ENCODE measurements at regions of chr11 and their contacts with region 1.

Region 1: DNA sequence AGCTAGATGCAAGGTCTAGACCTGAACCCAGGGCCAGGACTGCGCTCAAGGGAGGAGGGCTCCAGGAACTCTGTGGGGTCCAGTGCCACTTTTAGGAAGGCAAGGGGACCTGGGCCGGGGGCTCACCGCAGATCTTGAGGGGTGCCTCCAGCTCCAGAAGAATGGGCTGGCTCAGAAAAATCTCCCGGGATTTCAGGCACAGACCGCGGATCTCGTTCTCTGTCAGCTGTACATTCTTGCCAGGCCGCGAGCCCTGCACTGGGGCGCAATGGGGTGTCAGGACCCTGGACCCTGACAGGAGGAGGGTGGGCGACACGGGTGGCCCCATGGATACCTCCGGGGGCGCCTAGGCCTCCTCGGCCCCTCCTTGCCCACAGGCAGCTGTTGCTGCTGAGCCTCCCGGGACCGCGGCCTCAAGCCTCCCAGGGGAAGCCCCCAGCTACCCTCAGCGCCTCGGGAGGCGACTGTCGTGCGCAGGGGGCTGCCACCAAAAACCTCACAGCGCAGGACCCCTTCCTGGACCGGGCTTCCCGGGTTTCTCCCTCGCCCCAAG is 640 bp downstream of the PPP1CA start:
- DNase-seq: no peak
- ATAC-seq: peak; percentile 7

Region 2: DNA sequence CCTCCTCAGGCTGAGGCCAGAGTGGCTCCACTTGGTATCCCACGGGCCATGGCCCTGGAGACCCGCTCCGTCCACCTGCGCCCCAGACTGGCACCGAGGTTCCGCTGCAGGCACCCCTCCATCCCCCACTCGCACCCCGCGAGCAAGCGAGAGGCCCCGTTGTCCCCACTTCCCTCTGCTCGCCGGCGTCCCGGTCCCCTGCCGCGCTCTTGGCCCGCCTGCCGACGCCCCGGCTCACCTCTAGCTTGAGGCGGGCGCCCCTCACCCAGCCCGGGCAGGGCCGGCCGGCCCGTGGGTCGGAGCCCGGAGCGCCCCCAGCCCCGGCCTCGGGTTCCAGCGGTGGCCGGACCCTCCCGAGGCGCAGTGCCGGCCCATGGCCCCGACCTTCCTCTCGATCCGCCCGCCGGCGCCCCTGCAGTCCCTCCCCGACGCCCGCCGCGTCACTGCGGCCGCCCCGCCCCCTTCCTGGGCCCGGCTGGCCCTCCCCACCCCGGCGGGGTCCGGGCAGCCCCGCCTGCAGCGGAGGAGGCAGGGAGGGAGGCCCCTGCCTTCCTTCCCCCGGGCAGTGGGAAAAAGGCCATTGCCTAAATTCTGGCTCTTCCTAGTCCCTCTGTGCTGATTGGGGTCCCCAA is 104.0 kb after region 1 on chr11 and contains the start of gene PITPNM1:
- intact Hi-C with region 1: loop called (anchors 5 kb)
- DNase-seq: peak; percentile 89
- ATAC-seq: peak; percentile 47
- total RNA-seq, gene PITPNM1: 80.0 TPM

Region 3: DNA sequence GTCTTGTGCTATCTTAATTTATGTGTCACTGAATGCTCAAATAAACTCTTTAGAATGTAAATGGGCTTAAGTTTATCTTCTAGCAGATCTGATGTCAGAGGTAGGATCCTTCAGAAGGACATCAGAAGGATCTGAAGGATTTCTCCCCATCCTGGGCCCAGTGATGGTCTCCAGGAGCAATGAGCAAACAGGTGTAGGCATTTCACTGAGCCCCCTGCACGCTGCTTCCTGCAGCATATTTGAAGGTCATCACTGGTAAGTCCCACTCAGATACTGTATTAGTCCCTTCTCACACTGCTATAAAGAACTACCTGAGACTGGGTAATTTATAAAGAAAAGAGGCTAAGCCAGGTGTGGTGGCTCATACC is 187.1 kb after region 1 on chr11:
- intact Hi-C with region 1: no loop called
- DNase-seq: no peak
- ATAC-seq: no peak